ENCODE measurements at regions of chr11 and their contacts with region 1.

Region 1: DNA sequence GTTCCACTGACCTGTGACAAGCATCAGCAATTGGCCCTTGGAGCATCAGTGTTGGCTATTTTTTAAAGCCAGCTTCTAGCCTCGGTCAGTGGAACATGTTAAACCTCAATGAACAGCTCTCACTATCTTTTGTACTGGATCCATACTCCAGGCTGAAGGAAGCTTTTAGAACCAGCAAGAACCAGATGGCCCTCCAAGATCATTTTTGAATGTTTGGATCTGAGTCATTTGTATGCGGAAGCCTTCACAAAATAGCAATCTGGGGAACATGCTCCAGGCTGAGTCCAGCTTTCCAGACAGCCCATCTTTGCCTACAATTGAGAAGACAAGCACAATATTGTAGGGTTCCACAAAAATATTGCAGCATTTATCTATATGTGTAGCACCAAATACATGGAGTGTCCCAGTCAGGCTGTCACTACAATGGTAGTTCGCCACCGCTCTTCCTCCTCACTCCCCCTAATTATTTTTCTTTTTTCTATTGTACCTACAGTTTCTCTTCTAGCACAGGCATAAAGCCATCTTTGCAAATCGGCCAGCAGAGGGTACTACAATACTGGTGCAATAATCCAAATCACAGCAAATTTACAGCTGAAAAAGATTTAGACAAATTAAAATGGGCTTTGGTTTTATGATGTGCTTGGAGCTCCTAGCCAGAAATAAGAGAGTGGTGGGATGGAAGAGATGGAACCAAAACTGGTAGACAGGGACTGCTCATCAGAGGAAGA is 177.4 kb upstream of the BLID start:
- DNase-seq: no peak
- H3K4me3 ChIP-seq: no peak overlapping the region
- H3K27ac ChIP-seq: peak overlapping the region; percentile 1
- H3K4me1 ChIP-seq: no peaks in the 10 kb centered on the region
- H3K27me3 ChIP-seq: no peaks in the 10 kb centered on the region
- CTCF ChIP-seq: peak in 1 of 3 experiments; percentile 17
- POLR2A ChIP-seq: no peak

Region 2: DNA sequence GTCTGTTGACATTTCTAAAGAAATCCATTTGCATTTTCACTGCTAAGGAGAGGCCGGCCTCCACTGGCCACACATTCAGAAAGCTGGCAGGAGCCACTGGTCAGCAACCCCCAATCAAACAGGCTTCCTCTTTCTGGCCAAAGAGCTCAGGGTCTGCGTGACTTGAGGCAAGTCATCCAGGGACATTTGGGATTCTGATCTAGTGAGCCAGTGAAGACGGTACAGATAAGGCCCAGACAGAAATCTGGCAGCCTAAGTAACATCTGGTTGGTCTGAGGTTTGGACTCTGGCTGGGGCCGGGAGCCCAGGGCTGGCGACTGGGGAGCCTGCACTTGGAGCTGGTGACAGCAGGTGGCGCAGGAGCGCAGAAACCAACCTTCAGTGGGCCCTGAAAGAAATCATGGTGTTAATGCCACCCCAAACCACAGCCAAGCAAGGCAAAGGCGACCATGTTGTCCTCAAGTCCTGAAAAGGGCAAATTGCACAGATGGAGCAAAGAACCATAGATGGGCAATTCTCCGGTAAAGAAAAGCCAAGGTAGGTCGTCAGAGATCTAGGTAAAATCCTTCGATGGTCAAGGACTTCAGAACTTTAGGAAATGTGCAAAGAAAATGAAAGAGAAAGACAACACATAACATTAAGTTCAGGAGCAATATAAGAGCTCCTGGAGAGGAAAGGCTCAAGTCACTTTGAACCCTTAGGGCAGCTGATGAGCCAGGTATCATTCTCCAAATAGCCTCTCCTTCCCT is 78.0 kb before region 1 on chr11:
- intact Hi-C with region 1: loop called (anchors 10 kb)
- DNase-seq: no peak
- H3K4me3 ChIP-seq: no peak overlapping the region
- H3K27ac ChIP-seq: peak overlapping the region; percentile 2
- H3K4me1 ChIP-seq: peaks cover 12% of the 10 kb centered on the region
- H3K27me3 ChIP-seq: no peaks in the 10 kb centered on the region
- CTCF ChIP-seq: peak; percentile 24 to 87 (median 64)
- POLR2A ChIP-seq: no peak

Region 3: DNA sequence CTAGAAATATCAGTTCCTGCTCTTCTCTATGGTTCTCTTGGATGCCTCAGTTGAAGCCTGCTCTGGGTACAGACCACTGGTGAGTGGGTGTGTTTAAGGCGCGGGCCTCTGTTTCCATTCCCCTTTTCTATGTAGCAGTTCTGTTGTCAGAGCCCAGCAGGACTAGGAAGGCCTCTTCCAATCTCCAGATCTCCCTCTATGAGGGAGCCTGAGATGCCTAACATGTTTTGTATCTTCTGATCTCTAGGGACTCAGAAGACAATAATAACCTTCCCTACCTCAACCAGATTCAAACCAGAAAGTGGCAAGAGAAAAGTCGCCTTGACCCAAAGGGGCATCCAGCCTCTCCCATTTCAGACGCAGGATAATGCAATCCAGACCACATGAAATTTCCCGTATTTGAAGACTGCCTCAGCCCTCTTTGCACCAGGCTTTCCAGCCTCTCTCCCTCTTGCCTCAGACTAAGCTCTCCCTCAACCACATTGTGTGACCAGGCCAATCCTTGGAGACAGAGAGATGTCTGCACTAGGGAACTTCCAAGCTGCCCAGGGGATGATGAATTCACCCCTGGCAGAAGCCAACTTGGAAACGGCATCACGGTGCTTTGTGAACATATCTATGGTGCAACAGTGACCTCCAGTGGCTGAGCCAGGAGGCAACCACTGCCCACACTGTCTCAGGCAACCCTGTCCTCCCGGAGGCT is 212.0 kb after region 1 on chr11:
- intact Hi-C with region 1: no loop called
- DNase-seq: peak in 1 of 2 donors; percentile 96
- H3K4me3 ChIP-seq: no peak overlapping the region
- H3K27ac ChIP-seq: peak overlapping the region; percentile 56
- H3K4me1 ChIP-seq: no peaks in the 10 kb centered on the region
- H3K27me3 ChIP-seq: no peaks in the 10 kb centered on the region
- CTCF ChIP-seq: peak; percentile 67 to 92 (median 91)
- POLR2A ChIP-seq: no peak

Measured in vagina (tissue), 2 donors.